ENCODE measurements at regions of chr21 and their contacts with region 1.

Region 1: DNA sequence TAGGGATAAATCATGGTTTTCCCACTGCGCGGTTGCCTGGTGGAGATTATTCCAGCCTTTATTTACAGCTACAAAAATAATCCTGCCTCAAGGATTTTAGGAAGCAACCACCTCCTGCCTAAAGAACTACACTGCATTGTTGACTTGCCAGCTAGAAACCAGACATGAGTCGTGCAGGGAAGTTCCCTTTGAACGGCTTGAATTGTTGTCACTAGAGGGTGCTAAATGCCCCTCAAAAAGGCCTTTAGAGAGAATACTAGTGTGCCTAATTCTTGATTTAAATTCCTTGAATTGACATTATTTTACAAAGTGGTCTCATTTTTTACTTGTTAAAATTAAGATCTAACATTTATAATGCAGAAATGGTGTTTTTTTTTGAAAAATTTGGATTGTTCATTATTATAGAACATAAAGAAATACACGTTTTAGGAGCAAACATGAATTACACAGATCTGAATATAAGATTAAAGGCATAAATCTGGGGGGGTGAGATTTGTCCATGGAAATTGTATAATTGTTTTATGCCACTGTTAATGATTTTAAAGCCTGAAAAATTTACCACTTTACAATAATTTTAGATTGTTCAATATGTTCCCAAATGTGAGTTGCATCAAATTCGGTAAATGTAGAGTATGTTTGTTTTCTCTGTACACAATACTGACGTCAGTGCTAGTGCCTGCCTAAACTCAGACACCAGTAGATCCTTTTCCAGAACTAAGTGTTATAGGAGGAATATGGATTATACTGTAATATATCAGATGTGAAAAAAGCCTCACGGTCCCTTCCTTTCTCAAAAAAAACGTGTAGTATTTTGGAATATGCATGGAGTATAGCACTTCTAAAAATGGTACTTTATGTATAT is 7.6 kb upstream of the ERG start:
- DNase-seq: peak in 1 of 10 donors; percentile 49
- H3K4me3 ChIP-seq: peak overlapping the region in 9 of 59 donors; percentile 14 to 37 (median 20)
- H3K27ac ChIP-seq: no peak overlapping the region
- H3K27me3 ChIP-seq: peaks cover 0 to 19% (median 0%) of the 10 kb centered on the region in 45 donors
- CTCF ChIP-seq: peak; percentile 42 to 82 (median 65)

Region 2: GRCh38 chr21:39137248-39138178 is 631.6 kb after region 1 on chr21:
- intact Hi-C with region 1: loop called (anchors 5 to 10 kb)
- DNase-seq: no peak
- H3K4me3 ChIP-seq: no peak overlapping the region
- H3K27ac ChIP-seq: no peak overlapping the region
- H3K27me3 ChIP-seq: no peaks in the 10 kb centered on the region
- CTCF ChIP-seq: no peak

Measured in dorsolateral prefrontal cortex (tissue), 120 donors.